WTC11 (cell line): ENCODE measurements at regions of chr10 and their contacts with region 1.

Region 1: GRCh38 chr10:75210282-75211006 is at the start of gene VDAC2:
- DNase-seq: peak; percentile 83
- ATAC-seq: peak; percentile 80
- H3K4me3 Mint-ChIP-seq: peak within 1 kb of the TSS; percentile 97
- H3K27ac Mint-ChIP-seq: peak within 1 kb of the TSS; percentile 98
- H3K4me1 Mint-ChIP-seq: peaks cover 42% of the 10 kb centered on the region
- H3K27me3 Mint-ChIP-seq: no peaks in the 10 kb centered on the region
- CTCF ChIP-seq: no peak
- total RNA-seq, gene VDAC2: 283 to 284 TPM (median 283 TPM) in 3 replicates

Region 2: GRCh38 chr10:75088640-75089039 is 121.8 kb before region 1 on chr10:
- CTCF ChIA-PET with region 1: no interaction called
- POLR2A ChIA-PET with region 1: no interaction called
- DNase-seq: no peak
- ATAC-seq: no peak
- H3K4me3 Mint-ChIP-seq: no peak overlapping the region
- H3K27ac Mint-ChIP-seq: no peak overlapping the region
- H3K4me1 Mint-ChIP-seq: peaks cover 42% of the 10 kb centered on the region
- H3K27me3 Mint-ChIP-seq: no peaks in the 10 kb centered on the region; the same call in 1 of the 2 replicates
- CTCF ChIP-seq: no peak

Region 3: DNA sequence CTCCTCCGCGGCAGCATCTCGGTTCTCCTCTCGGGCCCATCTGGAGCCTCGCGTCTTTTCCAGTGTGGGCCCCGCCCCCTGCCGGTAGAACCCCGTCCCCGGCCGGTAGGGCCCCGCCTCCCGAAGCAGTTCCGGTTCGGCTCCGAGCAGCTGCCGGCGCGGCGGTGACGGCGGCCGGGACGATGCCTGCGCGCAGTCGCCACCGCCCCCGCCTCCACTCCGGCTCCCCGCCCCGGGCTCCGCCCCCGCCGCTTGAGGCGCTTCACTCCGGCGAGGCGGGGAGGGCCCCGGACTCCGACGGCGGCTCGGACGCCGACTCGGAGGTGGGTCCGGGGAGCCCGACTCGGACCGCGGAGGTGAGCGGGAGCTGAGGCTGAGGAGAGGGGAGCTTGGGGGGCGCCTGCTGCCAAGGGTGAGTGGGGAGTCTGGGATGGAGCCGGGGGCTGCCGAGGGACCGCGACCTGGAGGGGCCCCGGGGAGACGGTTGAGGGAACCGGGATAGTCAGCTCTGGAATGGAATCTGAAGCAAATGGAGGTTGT is 99.0 kb before region 1 on chr10 and contains the start of gene SAMD8:
- CTCF ChIA-PET with region 1: interaction called, 3 read pairs
- POLR2A ChIA-PET with region 1: interaction called, 14 read pairs
- DNase-seq: peak; percentile 98
- ATAC-seq: no peak
- H3K4me3 Mint-ChIP-seq: peak within 1 kb of the TSS; percentile 97
- H3K27ac Mint-ChIP-seq: peak within 1 kb of the TSS; percentile 99
- H3K4me1 Mint-ChIP-seq: peaks cover 53% of the 10 kb centered on the region
- H3K27me3 Mint-ChIP-seq: no peaks in the 10 kb centered on the region
- CTCF ChIP-seq: peak; percentile 44; the same call in 1 of the 2 replicates
- total RNA-seq, gene SAMD8: 20.9 to 23.0 TPM (median 21.7 TPM) in 3 replicates

Region 4: DNA sequence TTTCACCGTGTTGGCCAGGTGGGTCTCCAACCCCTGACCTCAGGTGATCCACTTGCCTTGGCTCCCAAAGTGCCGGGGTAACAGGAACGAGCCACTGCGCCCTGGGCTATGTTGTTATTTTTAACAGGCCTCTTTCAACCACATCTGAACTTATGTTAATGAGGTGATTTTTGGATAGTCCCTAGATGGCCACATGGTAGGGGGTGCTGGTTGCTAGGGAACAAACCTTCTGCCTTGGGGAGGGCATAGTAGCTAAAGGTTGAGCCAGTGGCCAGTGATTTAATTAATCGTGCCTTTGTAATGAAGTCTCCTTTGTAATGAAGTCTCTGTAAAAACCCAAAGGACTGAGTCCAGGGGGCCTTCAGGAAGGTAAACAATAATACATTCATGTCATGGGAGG is 16.2 kb after region 1 on chr10:
- CTCF ChIA-PET with region 1: interaction called, 16 read pairs
- POLR2A ChIA-PET with region 1: interaction called, 18 read pairs
- DNase-seq: peak; percentile 47
- ATAC-seq: peak; percentile 2
- H3K4me3 Mint-ChIP-seq: peak overlapping the region; percentile 42
- H3K27ac Mint-ChIP-seq: peak overlapping the region; percentile 98
- H3K4me1 Mint-ChIP-seq: peaks cover 69% of the 10 kb centered on the region
- H3K27me3 Mint-ChIP-seq: no peaks in the 10 kb centered on the region
- CTCF ChIP-seq: no peak

Region 5: DNA sequence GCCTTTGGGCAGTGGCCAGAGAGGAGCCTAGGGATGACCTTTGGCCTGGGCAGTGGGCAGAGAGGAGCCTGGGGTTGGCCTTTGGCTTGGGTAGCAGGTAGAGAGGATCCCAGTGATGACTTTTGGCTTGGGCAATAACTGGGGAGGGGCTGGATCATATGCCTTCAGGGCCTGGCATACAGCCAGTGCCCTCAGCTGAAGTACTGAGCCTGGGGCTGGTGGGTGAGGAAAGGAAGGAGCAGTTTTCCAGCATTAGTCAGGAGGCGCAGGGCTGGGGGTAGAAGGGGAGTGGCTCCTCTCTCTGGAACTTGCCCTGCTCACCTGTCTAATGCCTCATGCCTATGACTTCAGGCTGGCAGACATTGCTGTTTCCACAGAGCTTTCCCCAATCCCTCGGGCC is 40.5 kb after region 1 on chr10:
- CTCF ChIA-PET with region 1: no interaction called
- POLR2A ChIA-PET with region 1: no interaction called
- DNase-seq: no peak
- ATAC-seq: no peak
- H3K4me3 Mint-ChIP-seq: no peak overlapping the region
- H3K27ac Mint-ChIP-seq: no peak overlapping the region
- H3K4me1 Mint-ChIP-seq: peaks cover 4% of the 10 kb centered on the region
- H3K27me3 Mint-ChIP-seq: no peaks in the 10 kb centered on the region
- CTCF ChIP-seq: no peak

Region 6: GRCh38 chr10:75283671-75284470 is 73.4 kb after region 1 on chr10:
- CTCF ChIA-PET with region 1: no interaction called
- POLR2A ChIA-PET with region 1: no interaction called
- DNase-seq: no peak
- ATAC-seq: peak; percentile 18
- H3K4me3 Mint-ChIP-seq: peak overlapping the region; percentile 74
- H3K27ac Mint-ChIP-seq: no peak overlapping the region
- H3K4me1 Mint-ChIP-seq: peaks cover 14% of the 10 kb centered on the region
- H3K27me3 Mint-ChIP-seq: peaks cover 51% of the 10 kb centered on the region
- CTCF ChIP-seq: no peak